ENCODE measurements at regions of chr20 and their contacts with region 1.

Region 1: DNA sequence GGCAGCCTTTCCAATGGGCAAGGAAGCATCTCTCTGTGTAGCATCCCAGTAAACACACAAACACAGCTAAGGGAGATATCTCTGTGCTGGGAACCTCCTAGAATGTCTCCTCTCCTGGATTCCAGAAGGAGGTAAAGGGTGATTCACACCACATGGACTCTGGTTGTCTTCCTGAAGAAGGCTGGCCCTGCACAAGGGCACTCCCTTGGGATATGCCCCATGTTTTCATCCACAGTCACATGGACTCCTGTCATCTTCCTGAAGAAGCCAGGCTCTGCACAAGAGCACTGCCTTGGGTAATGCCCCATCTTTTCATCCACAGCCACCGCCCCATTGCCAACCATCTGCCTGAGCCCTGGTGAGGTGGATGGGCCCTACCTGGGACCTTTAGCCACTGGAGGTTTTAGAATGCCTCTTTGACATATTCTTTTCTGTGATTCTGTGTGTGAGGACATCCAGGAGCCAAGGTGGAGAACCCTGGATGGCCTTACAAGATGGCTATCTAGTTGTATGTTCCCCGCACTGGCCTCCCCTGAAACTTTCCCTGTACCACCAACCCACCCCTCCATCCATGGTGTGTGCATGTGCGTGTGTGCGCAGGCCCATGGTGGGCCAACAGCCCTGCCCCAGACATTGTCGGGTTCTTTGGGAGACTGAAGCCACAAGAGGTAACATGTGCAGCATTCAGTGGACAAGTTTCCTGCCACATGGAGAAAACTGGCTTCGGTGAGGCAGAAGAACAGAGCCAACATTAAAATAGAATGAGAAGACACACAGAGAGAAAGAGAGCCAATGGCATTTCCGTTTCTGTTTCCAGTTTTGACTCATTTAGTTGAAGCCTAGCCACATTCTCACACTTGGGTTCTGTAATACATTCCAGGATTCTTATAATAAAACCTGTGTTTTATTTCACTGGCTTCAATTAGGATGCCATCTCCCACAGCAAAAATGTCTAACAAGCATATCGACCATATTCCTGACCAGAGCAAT is 110.2 kb upstream of the CST7 start:
- DNase-seq: no peak
- ATAC-seq: no peak
- H3K4me3 ChIP-seq: no peak overlapping the region
- H3K27ac ChIP-seq: no peak overlapping the region
- H3K4me1 ChIP-seq: no peaks in the 10 kb centered on the region
- H3K27me3 ChIP-seq: peaks cover 2 to 12% of the 10 kb centered on the region in 2 experiments; a peak in 2 of 5 replicates
- CTCF ChIP-seq: no peak
- EP300 ChIP-seq: no peak
- POLR2A ChIP-seq: no peak
- RAD21 ChIP-seq: no peak

Region 2: DNA sequence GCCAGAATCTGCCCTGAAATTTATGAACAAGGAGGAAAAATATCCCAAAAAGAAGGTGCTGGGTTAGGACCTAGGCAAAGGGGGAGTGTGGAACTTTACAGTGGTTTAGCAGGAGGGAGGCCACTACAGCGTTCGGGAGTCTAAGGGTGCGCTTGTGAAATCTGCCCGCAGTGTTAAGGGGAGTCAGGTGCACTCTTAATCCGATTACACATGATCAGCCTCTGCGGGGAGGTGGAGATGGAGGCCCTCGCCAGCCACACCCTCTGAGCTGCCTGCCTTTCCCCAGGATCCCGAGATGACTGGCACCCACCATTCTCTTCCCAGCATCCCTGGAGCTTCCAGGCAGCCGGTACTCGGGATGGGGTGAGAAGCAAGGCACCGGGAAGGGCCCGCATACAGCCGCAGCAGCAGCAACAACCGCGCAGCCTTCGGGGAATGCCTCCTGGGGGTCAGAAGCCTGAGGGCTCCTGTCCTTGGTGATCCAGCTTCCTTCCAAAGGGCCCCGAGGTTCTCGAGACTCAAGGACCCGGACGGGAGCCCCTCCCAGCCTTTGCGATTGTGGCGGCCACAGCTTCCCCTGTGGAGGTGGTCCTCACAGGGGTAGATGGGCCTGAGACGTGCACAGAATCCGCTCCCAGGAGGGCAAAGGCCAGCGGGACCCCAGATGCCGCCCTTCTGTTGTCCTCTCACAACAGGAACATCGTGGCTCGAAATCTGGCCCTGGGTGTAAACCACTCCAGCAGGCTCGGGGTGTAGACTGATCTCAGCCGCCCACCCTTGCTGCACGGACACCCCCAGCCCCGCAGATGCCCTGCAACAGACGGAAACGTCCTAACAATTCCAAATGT is 52.9 kb after region 1 on chr20:
- CTCF ChIA-PET with region 1: no interaction called
- POLR2A ChIA-PET with region 1: no interaction called
- in situ Hi-C with region 1: loop called (anchors 10 kb)
- intact Hi-C with region 1: no loop called
- DNase-seq: no peak
- ATAC-seq: no peak; the same call in 2 of the 3 replicates
- H3K4me3 ChIP-seq: no peak overlapping the region
- H3K27ac ChIP-seq: no peak overlapping the region
- H3K4me1 ChIP-seq: no peaks in the 10 kb centered on the region
- H3K27me3 ChIP-seq: peaks cover 3 to 33% of the 10 kb centered on the region in 2 experiments; a peak in 2 of 5 replicates
- CTCF ChIP-seq: no peak
- EP300 ChIP-seq: no peak
- POLR2A ChIP-seq: no peak
- RAD21 ChIP-seq: no peak

Region 3: GRCh38 chr20:25090492-25091429 is 251.9 kb after region 1 on chr20:
- CTCF ChIA-PET with region 1: no interaction called
- POLR2A ChIA-PET with region 1: no interaction called
- in situ Hi-C with region 1: no loop called
- intact Hi-C with region 1: no loop called
- DNase-seq: no peak
- ATAC-seq: peak; percentile 32
- H3K4me3 ChIP-seq: no peak overlapping the region
- H3K27ac ChIP-seq: no peak overlapping the region
- H3K4me1 ChIP-seq: no peaks in the 10 kb centered on the region
- H3K27me3 ChIP-seq: peaks cover 5 to 48% of the 10 kb centered on the region in 2 experiments; a peak in 3 of 5 replicates
- CTCF ChIP-seq: no peak
- EP300 ChIP-seq: no peak
- POLR2A ChIP-seq: no peak
- RAD21 ChIP-seq: no peak

Measured in HepG2 (cell line).